Aorta (tissue), 5 donors: ENCODE measurements at regions of chr11 and their contacts with region 1.

Region 1: GRCh38 chr11:50155515-50155914 is 122.8 kb downstream of the OR4C45 start:
- DNase-seq: no peak
- ATAC-seq: no peak
- H3K4me3 ChIP-seq: no peak overlapping the region
- H3K27ac ChIP-seq: no peak overlapping the region
- H3K4me1 ChIP-seq: no peaks in the 10 kb centered on the region
- H3K27me3 ChIP-seq: no peaks in the 10 kb centered on the region

Region 2: DNA sequence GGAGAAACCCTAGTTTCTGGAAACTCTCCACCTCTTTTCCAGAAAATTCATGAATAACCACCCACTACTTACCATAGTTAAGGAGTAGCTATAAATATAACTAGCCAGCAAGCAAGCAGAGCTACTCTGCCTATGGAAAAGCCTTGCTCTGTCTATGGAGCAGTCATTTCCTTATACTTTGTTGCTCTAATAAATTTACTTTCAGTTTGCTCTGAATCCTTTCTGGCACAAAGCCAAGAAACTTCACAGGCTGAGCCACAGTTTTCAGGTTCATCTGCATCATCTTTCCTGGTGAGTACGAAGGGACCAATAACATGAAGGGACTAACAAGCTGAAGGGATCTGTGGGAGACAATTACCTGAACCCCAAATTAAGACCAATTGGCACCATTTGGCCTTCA is 118.3 kb before region 1 on chr11:
- intact Hi-C with region 1: no loop called
- DNase-seq: no peak
- ATAC-seq: no peak
- H3K4me3 ChIP-seq: no peak overlapping the region
- H3K27ac ChIP-seq: no peak overlapping the region
- H3K4me1 ChIP-seq: no peaks in the 10 kb centered on the region
- H3K27me3 ChIP-seq: no peaks in the 10 kb centered on the region

Region 3: GRCh38 chr11:50192743-50193142 is 37.2 kb after region 1 on chr11:
- intact Hi-C with region 1: no loop called
- DNase-seq: no peak
- ATAC-seq: no peak
- H3K4me3 ChIP-seq: no peak overlapping the region
- H3K27ac ChIP-seq: no peak overlapping the region
- H3K4me1 ChIP-seq: no peaks in the 10 kb centered on the region
- H3K27me3 ChIP-seq: no peaks in the 10 kb centered on the region

Region 4: DNA sequence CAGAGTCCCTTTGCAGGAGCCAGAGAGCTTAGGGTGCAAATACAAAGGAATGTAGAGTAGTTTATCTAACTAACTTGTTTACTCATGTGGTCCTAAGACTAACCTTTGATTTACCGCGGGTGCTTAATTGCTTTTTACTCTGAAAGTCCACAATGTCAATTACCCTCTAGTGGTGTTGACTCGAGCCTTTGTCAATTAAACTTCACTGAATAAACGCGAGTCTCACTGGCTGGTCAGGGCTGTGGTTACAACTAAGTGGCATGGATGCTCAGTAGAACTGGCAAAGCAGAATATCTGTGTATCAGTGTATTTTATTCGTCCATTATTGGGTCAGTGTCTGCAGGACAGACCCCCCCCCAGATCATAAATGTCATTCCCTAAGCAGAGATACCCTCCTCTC is 58.9 kb after region 1 on chr11:
- intact Hi-C with region 1: no loop called
- DNase-seq: no peak
- ATAC-seq: no peak
- H3K4me3 ChIP-seq: no peak overlapping the region
- H3K27ac ChIP-seq: no peak overlapping the region
- H3K4me1 ChIP-seq: no peaks in the 10 kb centered on the region
- H3K27me3 ChIP-seq: no peaks in the 10 kb centered on the region

Region 5: GRCh38 chr11:50247309-50247874 is 91.9 kb after region 1 on chr11:
- intact Hi-C with region 1: loop called in 1 of 2 experiments (anchors 5 kb)
- DNase-seq: peak in 1 of 2 donors; percentile 63
- ATAC-seq: no peak
- H3K4me3 ChIP-seq: no peak overlapping the region
- H3K27ac ChIP-seq: no peak overlapping the region
- H3K4me1 ChIP-seq: no peaks in the 10 kb centered on the region
- H3K27me3 ChIP-seq: no peaks in the 10 kb centered on the region